ENCODE measurements at regions of chr2 and their contacts with region 1.

Region 1: GRCh38 chr2:172427256-172427989 is at the start of gene ITGA6:
- DNase-seq: peak; percentile 83
- H3K4me3 Mint-ChIP-seq: peak within 1 kb of the TSS; percentile 86
- H3K27ac Mint-ChIP-seq: peak within 1 kb of the TSS; percentile 95
- H3K4me1 Mint-ChIP-seq: peaks cover 16% of the 10 kb centered on the region
- H3K27me3 Mint-ChIP-seq: no peaks in the 10 kb centered on the region
- CTCF ChIP-seq: no peak
- total RNA-seq, gene ITGA6: 315 and 323 TPM in 2 replicates

Region 2: GRCh38 chr2:171244970-171245782 is 1182.2 kb before region 1 on chr2:
- CTCF ChIA-PET with region 1: no interaction called
- POLR2A ChIA-PET with region 1: no interaction called
- intact Hi-C with region 1: no loop called
- DNase-seq: peak; percentile 9
- H3K4me3 Mint-ChIP-seq: no peak overlapping the region
- H3K27ac Mint-ChIP-seq: no peak overlapping the region
- H3K4me1 Mint-ChIP-seq: no peaks in the 10 kb centered on the region
- H3K27me3 Mint-ChIP-seq: no peaks in the 10 kb centered on the region
- CTCF ChIP-seq: no peak

Region 3: GRCh38 chr2:172200495-172201085 is 226.8 kb before region 1 on chr2:
- CTCF ChIA-PET with region 1: interaction called, 3 read pairs
- POLR2A ChIA-PET with region 1: interaction called, 13 read pairs
- intact Hi-C with region 1: no loop called
- DNase-seq: peak; percentile 51
- H3K4me3 Mint-ChIP-seq: no peak overlapping the region
- H3K27ac Mint-ChIP-seq: peak overlapping the region; percentile 49
- H3K4me1 Mint-ChIP-seq: peaks cover 30% of the 10 kb centered on the region
- H3K27me3 Mint-ChIP-seq: no peaks in the 10 kb centered on the region
- CTCF ChIP-seq: peak; percentile 41

Region 4: GRCh38 chr2:172226244-172227061 is 201.0 kb before region 1 on chr2:
- CTCF ChIA-PET with region 1: interaction called, 10 read pairs
- POLR2A ChIA-PET with region 1: interaction called, 103 read pairs
- intact Hi-C with region 1: loop called (anchors 2 kb)
- DNase-seq: no peak
- H3K4me3 Mint-ChIP-seq: no peak overlapping the region
- H3K27ac Mint-ChIP-seq: no peak overlapping the region
- H3K4me1 Mint-ChIP-seq: peaks cover 55% of the 10 kb centered on the region
- H3K27me3 Mint-ChIP-seq: no peaks in the 10 kb centered on the region
- CTCF ChIP-seq: peak; percentile 23

Region 5: DNA sequence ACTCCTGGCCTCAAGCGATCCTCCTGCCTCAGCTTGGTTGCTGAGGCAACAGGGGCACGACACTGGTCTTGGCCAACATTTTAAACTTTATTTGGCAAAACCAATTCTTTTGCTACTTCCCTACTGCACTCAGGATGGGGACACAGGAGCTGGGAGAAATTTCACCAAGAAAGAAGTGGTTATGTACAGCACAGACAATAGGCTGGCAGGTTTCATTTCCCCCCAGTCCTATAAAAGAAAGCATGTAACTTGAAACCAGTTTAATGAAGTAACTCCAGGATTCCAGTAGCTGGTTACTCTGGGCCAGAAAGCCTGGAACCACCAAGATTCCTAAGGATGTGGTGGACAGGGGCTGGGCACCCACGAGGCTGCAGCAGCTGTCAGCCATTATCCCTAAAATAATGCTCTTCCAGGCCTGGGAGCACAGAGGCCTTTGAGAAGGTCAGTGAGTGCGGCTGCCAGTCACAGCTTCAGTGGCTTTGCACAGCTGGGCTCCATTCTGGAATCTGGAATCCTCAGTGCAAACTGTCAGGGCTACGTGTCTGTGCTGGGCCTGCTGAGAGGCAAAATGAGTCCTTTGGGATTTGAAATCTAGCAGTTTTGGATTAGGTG is 142.3 kb before region 1 on chr2:
- CTCF ChIA-PET with region 1: interaction called, 6 read pairs
- POLR2A ChIA-PET with region 1: interaction called, 35 read pairs
- intact Hi-C with region 1: loop called (anchors 10 kb)
- DNase-seq: peak; percentile 41
- H3K4me3 Mint-ChIP-seq: no peak overlapping the region
- H3K27ac Mint-ChIP-seq: no peak overlapping the region
- H3K4me1 Mint-ChIP-seq: peaks cover 22% of the 10 kb centered on the region
- H3K27me3 Mint-ChIP-seq: no peaks in the 10 kb centered on the region
- CTCF ChIP-seq: no peak

Region 6: DNA sequence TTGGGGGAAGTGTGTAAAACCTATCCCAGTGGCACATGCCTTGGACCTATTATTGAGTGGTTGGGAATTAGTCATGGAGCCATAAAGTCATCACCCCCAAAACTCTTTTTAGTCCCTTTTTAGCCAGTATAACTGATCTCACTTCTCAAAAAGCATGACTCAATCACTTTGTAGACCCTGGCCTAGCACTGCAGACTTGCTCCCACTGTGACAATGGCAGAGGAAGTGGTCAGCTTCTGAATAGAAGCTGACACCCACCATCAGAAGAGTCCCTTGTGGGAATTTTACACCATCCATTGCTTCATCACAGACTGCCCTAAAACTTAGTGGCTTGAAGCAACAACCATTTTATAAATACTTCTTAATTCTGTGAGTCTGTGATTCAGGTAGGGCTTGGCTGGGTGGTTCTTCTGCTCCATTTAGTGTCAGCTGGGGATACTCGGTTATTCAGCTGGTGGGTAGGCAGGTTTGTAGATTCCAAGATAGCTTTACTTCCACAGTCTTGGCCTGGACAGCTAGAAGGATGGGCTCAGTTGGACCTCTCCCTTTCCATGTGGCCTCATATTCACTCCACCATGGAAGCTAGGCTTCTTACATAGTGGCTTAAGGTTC is 10.9 kb before region 1 on chr2:
- CTCF ChIA-PET with region 1: interaction called, 6 read pairs
- POLR2A ChIA-PET with region 1: interaction called, 14 read pairs
- intact Hi-C with region 1: no loop called
- DNase-seq: no peak
- H3K4me3 Mint-ChIP-seq: no peak overlapping the region
- H3K27ac Mint-ChIP-seq: no peak overlapping the region
- H3K4me1 Mint-ChIP-seq: no peaks in the 10 kb centered on the region
- H3K27me3 Mint-ChIP-seq: no peaks in the 10 kb centered on the region
- CTCF ChIP-seq: no peak

Region 7: DNA sequence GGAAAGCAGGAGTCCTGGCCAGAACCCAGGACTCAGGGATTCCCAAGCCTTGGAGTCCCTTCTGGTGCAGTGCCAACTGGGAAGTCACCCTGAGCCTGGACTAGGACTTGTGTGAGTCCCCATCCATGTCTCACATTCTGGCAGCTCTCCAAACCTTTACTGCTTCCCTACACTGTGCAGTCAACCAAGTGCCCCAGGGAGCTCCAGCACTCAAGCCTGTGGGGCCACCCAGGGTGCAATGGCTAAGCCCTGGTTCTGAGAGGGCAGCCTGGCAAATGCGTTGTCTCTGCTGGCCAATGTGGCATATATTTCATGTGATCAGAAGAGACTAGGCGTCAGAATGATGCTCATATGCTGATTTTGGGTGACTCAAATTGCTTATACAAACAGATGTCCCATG is 1314.3 kb after region 1 on chr2:
- CTCF ChIA-PET with region 1: no interaction called
- POLR2A ChIA-PET with region 1: no interaction called
- intact Hi-C with region 1: no loop called
- DNase-seq: peak; percentile 20
- H3K4me3 Mint-ChIP-seq: no peak overlapping the region
- H3K27ac Mint-ChIP-seq: no peak overlapping the region
- H3K4me1 Mint-ChIP-seq: peaks cover 7% of the 10 kb centered on the region
- H3K27me3 Mint-ChIP-seq: peaks cover 11% of the 10 kb centered on the region
- CTCF ChIP-seq: no peak

Measured in MCF 10A (cell line).